IMR-90 (cell line): ENCODE measurements at regions of chr16 and their contacts with region 1.

Region 1: GRCh38 chr16:4814046-4814445 is 11.6 kb upstream of the ROGDI start:
- DNase-seq: no peak
- ATAC-seq: peak; percentile 61
- H3K4me3 ChIP-seq: no peak overlapping the region
- H3K27ac ChIP-seq: no peak overlapping the region
- H3K4me1 ChIP-seq: peaks cover 8% of the 10 kb centered on the region; the same call in 1 of the 2 replicates
- H3K27me3 ChIP-seq: no peaks in the 10 kb centered on the region
- CTCF ChIP-seq: no peak
- POLR2A ChIP-seq: no peak
- RAD21 ChIP-seq: no peak

Region 2: GRCh38 chr16:4795829-4796572 is 18.0 kb before region 1 on chr16:
- CTCF ChIA-PET with region 1: interaction called, 3 read pairs
- POLR2A ChIA-PET with region 1: interaction called, 13 read pairs
- dilution Hi-C with region 1: no loop called
- in situ Hi-C with region 1: no loop called
- intact Hi-C with region 1: no loop called
- DNase-seq: no peak
- ATAC-seq: no peak
- H3K4me3 ChIP-seq: no peak overlapping the region
- H3K27ac ChIP-seq: no peak overlapping the region
- H3K4me1 ChIP-seq: no peaks in the 10 kb centered on the region
- H3K27me3 ChIP-seq: no peaks in the 10 kb centered on the region
- CTCF ChIP-seq: no peak
- POLR2A ChIP-seq: no peak
- RAD21 ChIP-seq: no peak